ENCODE measurements at regions of chr6 and their contacts with region 1.

Region 1: DNA sequence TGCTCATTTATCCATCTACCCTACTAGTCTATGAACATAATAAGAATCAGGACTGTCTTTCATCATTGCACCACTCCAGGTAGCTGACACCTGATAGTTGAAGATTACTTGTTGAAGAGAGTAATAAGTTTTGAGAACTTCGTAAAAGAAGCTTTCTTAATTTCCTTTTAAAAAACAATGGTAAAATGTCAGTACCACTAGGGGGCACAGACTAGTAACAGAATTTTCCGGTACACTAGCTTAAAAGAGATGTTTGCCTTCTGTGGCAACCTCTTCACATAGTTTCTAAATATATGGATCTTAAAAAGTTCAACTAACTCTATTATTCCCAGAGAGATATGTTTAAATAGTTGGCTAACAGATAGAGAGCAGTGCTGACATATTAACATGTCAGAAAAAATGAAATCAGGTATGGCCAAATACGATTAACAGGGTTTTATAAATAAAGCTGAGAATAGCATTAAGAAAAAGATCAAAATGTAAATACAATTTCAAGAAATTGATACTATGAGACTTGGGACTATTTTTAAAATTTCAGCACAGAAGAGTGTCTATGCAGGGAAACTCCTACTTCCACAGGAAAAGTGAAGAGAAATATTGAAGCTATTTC is 5.4 kb upstream of the KCNQ5 start:
- DNase-seq: peak; percentile 49
- H3K4me3 Mint-ChIP-seq: no peak overlapping the region
- H3K27ac Mint-ChIP-seq: no peak overlapping the region
- H3K4me1 Mint-ChIP-seq: peaks cover 7% of the 10 kb centered on the region
- H3K27me3 Mint-ChIP-seq: no peaks in the 10 kb centered on the region
- CTCF ChIP-seq: peak; percentile 79

Region 2: DNA sequence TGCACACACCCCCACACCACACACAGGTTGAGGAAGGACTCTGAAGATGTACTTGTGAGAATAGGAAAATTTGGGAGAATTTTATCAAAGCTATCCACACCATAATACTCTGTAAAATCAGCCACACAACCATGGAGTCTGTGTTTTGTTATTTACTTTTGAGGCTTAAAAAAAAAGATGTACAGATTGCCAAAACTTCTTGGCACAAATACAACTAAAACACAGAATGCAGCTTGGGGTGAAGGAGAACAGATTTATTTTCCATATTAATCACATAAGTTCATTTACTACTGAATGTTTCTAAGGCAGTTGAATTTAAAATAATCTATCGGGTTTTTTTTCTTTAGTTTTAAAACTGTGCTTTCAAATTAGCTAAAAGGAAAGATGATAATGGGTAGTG is 27.4 kb before region 1 on chr6:
- CTCF ChIA-PET with region 1: interaction called, 13 read pairs
- POLR2A ChIA-PET with region 1: no interaction called
- intact Hi-C with region 1: no loop called
- DNase-seq: peak; percentile 6
- H3K4me3 Mint-ChIP-seq: no peak overlapping the region
- H3K27ac Mint-ChIP-seq: no peak overlapping the region
- H3K4me1 Mint-ChIP-seq: peaks cover 11% of the 10 kb centered on the region
- H3K27me3 Mint-ChIP-seq: peaks cover 17% of the 10 kb centered on the region
- CTCF ChIP-seq: no peak

Region 3: DNA sequence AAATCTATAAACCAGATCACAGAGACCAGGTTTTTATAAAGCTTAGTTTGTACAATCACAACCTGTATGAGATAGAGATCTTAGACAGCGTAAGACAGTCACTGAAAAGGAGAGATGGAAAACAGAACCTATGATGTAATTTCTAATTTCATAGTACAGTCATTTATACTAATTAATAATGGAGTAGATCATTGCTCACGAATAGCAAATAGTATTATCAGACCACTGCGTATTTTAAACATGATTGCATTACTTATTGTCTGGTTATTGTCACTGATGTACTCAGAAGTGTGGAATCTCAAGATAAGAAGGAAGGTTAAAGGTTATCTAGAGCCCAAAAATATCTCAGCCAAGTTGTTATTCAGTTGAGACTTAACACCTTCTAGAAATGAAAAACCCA is 493.1 kb after region 1 on chr6:
- CTCF ChIA-PET with region 1: interaction called, 19 read pairs
- POLR2A ChIA-PET with region 1: no interaction called
- intact Hi-C with region 1: no loop called
- DNase-seq: no peak
- H3K4me3 Mint-ChIP-seq: no peak overlapping the region
- H3K27ac Mint-ChIP-seq: no peak overlapping the region
- H3K4me1 Mint-ChIP-seq: no peaks in the 10 kb centered on the region
- H3K27me3 Mint-ChIP-seq: no peaks in the 10 kb centered on the region
- CTCF ChIP-seq: no peak

Region 4: DNA sequence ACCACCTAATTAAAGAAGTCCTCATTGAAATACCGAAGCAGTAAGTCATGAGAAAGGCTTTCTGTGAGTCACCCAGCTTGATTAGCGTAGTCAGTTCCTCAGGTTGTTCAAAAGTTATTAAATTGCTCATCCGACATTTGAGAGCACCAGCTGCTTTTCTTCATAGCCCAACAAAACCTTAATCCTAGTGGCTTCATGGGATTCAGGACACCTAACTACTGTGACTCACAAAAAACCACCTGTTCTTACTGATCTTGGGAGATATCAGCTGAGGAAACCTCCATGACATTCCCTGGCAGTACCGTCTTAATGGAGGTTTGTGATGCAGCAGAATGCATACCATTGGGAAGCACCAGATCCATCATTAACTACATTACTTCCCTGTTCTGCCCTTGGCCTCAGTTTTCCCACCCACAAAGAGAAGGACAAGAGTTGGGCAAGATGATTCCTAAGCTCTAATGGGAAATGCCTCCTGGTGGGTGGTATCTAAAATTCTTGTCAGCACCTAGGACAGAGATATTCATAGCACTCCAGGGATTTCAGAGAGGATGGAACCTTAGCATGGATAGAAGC is 505.0 kb after region 1 on chr6:
- CTCF ChIA-PET with region 1: interaction called, 340 read pairs
- POLR2A ChIA-PET with region 1: no interaction called
- intact Hi-C with region 1: no loop called
- DNase-seq: peak; percentile 49
- H3K4me3 Mint-ChIP-seq: no peak overlapping the region
- H3K27ac Mint-ChIP-seq: no peak overlapping the region
- H3K4me1 Mint-ChIP-seq: no peaks in the 10 kb centered on the region
- H3K27me3 Mint-ChIP-seq: no peaks in the 10 kb centered on the region
- CTCF ChIP-seq: no peak

Region 5: GRCh38 chr6:73180763-73181619 is 564.5 kb after region 1 on chr6:
- CTCF ChIA-PET with region 1: interaction called, 68 read pairs
- POLR2A ChIA-PET with region 1: interaction called, 3 read pairs
- intact Hi-C with region 1: loop called (anchors 1 kb)
- DNase-seq: peak; percentile 70
- H3K4me3 Mint-ChIP-seq: peak overlapping the region; percentile 51
- H3K27ac Mint-ChIP-seq: no peak overlapping the region
- H3K4me1 Mint-ChIP-seq: no peaks in the 10 kb centered on the region
- H3K27me3 Mint-ChIP-seq: no peaks in the 10 kb centered on the region
- CTCF ChIP-seq: peak; percentile 81

Measured in MCF 10A (cell line).